Activated CD4-positive, alpha-beta T cell treated with anti-CD3 and anti-CD28 coated beads for 36 hours (primary cell): ENCODE measurements at regions of chr12 and their contacts with region 1.

Region 1: DNA sequence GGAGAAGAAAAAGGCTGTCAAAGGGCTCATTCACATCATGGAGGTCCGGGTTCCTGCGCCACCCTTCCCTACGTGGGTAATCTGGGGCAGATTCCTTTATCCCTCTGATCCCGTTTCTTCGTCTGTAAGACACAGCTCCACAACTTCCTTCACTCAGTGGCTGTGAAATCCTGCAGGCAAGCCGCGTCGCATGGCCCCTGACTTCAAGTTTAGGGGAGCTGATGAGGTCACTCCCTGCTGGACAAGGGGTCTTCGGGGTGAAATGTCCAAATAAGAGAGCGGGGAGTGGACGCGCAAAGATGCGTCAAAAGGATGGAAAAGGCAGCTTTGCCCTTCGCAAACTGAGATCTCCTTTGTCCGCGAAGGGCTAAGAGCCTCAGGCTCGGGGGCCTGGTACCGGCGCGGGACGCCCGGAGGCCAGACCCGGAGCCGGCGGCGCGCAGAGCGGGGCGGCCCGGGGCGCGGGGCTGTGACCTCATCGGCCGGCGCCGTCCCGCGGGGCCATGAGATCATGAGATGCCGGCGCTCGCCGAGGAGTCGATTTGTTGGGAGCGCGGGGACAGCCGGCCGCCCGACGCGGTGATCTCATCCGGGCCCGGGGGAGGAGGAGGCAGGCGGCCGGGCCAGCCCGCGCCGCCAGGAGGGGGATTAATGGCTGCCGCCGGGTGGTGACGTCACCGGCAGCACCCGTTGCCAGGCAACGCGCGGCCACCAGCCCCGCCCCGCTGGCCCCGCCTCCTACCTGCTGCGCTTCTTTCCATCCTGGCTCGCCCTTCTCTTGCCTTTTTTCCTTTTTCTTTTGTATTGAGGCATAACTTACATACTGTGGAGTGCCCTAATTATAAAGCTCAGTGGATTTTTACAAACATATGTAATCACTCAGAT is 62.1 kb downstream of the HRK start:
- DNase-seq: peak; percentile 94
- ATAC-seq: peak; percentile 96
- H3K4me3 Mint-ChIP-seq: peak overlapping the region; percentile 91
- H3K27ac Mint-ChIP-seq: peak overlapping the region; percentile 95
- H3K4me1 Mint-ChIP-seq: peaks cover 16% of the 10 kb centered on the region
- H3K27me3 Mint-ChIP-seq: no peaks in the 10 kb centered on the region

Region 2: DNA sequence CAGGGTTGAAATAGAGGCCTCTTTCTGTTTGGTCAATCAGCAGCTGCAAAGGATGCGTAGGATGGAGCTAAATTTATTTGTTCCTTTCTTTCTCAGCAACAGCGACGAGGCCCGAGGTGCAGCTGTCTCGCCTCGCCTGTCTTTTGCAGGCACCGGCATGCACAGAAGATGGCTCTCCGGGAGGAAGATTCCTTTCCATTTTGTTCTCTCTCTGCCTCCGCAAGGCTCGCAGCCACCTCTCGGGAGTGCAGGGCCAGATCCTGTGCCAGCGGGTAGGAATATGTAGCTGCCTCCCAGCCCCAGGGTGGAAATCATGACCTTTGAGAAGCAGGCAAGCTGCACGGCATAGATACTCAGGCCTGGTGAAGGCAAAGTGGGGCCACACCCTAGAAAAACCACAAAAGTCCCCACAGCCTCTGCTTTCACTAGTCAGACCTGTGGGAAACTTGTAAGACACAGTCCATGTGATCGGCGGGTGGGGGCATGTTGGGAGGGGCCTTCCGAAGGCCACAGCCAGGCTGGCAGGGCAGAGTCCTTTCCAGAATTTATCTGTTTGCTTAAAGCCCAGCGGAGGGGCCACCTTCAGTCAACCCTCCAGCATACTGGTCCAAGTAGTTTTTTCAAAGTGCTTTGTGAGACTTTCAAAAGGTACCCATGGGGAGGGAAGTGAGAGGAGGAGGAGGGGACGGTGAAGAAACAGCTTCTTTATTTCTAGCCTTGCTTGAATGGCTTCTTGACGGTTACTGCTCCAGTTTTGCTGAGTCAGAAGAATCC is 259.8 kb before region 1 on chr12 and contains the start of gene MAP1LC3B2:
- CTCF ChIA-PET with region 1: no interaction called
- POLR2A ChIA-PET with region 1: no interaction called
- intact Hi-C with region 1: loop called in 1 of 2 experiments (anchors 10 kb)
- DNase-seq: peak; percentile 87
- ATAC-seq: peak; percentile 89
- H3K4me3 Mint-ChIP-seq: peak within 1 kb of the TSS; percentile 66
- H3K27ac Mint-ChIP-seq: peak within 1 kb of the TSS; percentile 96
- H3K4me1 Mint-ChIP-seq: peaks cover 33% of the 10 kb centered on the region
- H3K27me3 Mint-ChIP-seq: no peaks in the 10 kb centered on the region
- total RNA-seq, gene MAP1LC3B2: 1.8 TPM in 1 of 2 experiments, not detected in the other

Region 3: DNA sequence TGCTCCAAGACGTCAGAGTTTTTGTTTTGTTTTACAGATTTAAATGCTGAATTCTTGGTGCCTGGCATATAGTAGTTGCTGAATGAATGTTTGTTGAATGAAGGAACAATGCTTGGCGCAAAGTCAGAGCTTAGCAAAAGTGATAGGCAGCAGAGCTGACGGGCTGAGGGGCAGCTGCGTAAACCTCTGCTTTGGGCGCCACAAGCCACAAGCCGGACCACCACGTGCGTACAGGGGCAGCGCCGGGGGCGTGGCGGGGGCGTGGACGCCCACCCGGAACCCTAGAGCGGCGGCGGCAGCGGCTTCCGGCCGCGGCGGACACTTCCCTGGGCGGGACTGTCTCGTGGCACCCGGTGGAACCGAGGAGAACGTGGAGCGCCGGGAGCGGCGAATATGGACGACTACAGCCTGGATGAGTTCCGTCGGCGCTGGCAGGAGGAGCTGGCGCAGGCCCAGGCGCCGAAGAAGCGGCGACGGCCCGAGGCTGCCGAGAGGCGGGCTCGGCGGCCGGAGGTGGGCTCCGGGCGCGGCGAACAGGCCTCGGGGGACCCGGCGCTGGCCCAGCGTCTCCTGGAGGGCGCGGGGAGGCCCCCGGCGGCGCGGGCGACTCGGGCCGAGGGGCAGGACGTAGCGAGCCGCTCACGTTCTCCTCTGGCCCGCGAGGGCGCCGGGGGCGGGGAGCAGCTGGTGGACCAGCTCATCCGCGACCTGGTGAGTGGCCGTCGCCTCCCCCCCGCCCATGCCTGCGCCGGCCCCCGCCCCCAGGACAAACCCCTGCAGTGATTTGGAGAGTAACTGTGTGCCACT is 91.7 kb after region 1 on chr12 and contains the start of gene FBXW8:
- CTCF ChIA-PET with region 1: no interaction called
- POLR2A ChIA-PET with region 1: no interaction called
- intact Hi-C with region 1: loop called in 1 of 2 experiments (anchors 2 kb)
- DNase-seq: peak; percentile 69
- ATAC-seq: peak; percentile 80
- H3K4me3 Mint-ChIP-seq: peak within 1 kb of the TSS; percentile 79
- H3K27ac Mint-ChIP-seq: peak within 1 kb of the TSS; percentile 88
- H3K4me1 Mint-ChIP-seq: peaks cover 26% of the 10 kb centered on the region
- H3K27me3 Mint-ChIP-seq: peaks cover 1% of the 10 kb centered on the region
- total RNA-seq, gene FBXW8: 5.7 to 6.1 TPM

Region 4: GRCh38 chr12:117098361-117099217 is 279.4 kb after region 1 on chr12:
- CTCF ChIA-PET with region 1: no interaction called
- POLR2A ChIA-PET with region 1: no interaction called
- intact Hi-C with region 1: loop called in 1 of 2 experiments (anchors 2 kb)
- DNase-seq: peak; percentile 63
- ATAC-seq: peak; percentile 25
- H3K4me3 Mint-ChIP-seq: peak overlapping the region; percentile 71
- H3K27ac Mint-ChIP-seq: no peak overlapping the region
- H3K4me1 Mint-ChIP-seq: peaks cover 18% of the 10 kb centered on the region
- H3K27me3 Mint-ChIP-seq: peaks cover 15% of the 10 kb centered on the region

Region 5: DNA sequence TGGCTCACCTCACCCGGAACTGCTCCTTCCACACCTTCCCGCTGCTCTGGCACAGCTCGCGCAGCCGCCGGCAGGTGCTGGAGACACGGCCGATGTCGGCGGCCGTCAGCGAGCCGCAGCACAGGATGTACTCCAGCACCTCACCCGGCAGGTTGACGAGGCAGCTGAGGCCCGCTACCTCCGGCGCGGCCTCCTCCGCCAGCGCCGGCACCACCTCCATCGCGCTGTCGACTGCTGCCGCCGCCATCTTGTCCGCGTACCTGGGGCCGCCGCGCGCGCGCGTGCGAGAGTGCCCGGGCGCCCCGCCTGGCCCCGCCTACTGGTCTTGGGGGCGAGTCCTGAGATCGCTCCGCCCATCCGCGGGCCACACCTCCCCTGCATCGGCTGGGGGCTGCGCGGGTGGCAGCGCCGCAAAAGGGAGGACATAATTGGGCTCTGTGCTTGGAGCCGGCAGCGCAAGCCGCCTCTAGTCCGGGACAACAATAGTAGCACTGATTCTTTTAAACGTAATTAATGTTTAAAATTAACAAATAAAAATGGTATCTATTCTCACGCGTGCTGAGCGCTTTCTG is 371.1 kb after region 1 on chr12 and contains the start of gene FBXO21:
- CTCF ChIA-PET with region 1: no interaction called
- POLR2A ChIA-PET with region 1: no interaction called
- intact Hi-C with region 1: loop called in 1 of 2 experiments (anchors 1 kb)
- DNase-seq: peak; percentile 96
- ATAC-seq: peak; percentile 97
- H3K4me3 Mint-ChIP-seq: peak within 1 kb of the TSS; percentile 95
- H3K27ac Mint-ChIP-seq: peak within 1 kb of the TSS; percentile 90
- H3K4me1 Mint-ChIP-seq: peaks cover 27% of the 10 kb centered on the region
- H3K27me3 Mint-ChIP-seq: no peaks in the 10 kb centered on the region
- total RNA-seq, gene FBXO21: 22.8 to 28.2 TPM